ENCODE measurements at regions of chr18 and their contacts with region 1.

Region 1: GRCh38 chr18:55322178-55322735 is 265.7 kb downstream of the TCF4 start:
- DNase-seq: peak; percentile 90 to 91
- H3K4me3 ChIP-seq: peak overlapping the region; percentile 56 to 70
- H3K27ac ChIP-seq: peak overlapping the region; percentile 84 to 88
- H3K4me1 ChIP-seq: peaks cover 0 to 30% (median 4%) of the 10 kb centered on the region in 4 donors
- H3K27me3 ChIP-seq: no peaks in the 10 kb centered on the region
- CTCF ChIP-seq: no peak

Region 2: DNA sequence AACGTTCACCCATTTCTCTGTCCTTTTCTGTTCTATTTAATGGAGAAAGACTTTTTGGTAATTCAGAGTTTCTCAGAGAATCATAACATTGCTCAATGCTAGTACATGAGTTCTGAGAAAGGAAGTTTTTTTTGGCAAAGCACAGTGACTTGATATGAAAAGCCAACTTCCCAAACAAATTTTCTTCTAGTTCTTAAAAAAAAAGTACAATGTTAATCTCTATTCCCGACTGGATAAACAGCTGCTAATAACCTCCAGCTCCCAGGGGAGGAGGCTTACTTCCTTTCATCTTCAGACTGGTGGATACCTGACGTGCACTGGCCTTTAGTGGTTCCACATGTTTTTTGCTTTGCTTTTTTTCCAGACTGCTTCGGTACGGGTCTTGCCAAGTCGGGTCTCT is 78.4 kb before region 1 on chr18:
- intact Hi-C with region 1: loop called (anchors 5 kb)
- DNase-seq: peak in 1 of 2 donors; percentile 59
- H3K4me3 ChIP-seq: peak overlapping the region; percentile 27 to 36
- H3K27ac ChIP-seq: peak overlapping the region; percentile 49 to 69
- H3K4me1 ChIP-seq: peaks cover 0 to 51% (median 22%) of the 10 kb centered on the region in 4 donors
- H3K27me3 ChIP-seq: no peaks in the 10 kb centered on the region
- CTCF ChIP-seq: no peak

Region 3: GRCh38 chr18:55405893-55406406 is 83.7 kb after region 1 on chr18:
- intact Hi-C with region 1: loop called (anchors 10 kb)
- DNase-seq: peak; percentile 89 to 91
- H3K4me3 ChIP-seq: peak overlapping the region in 1 of 2 donors; percentile 25
- H3K27ac ChIP-seq: peak overlapping the region; percentile 56 to 58
- H3K4me1 ChIP-seq: peaks cover 0 to 40% (median 10%) of the 10 kb centered on the region in 4 donors
- H3K27me3 ChIP-seq: no peaks in the 10 kb centered on the region
- CTCF ChIP-seq: no peak

Region 4: DNA sequence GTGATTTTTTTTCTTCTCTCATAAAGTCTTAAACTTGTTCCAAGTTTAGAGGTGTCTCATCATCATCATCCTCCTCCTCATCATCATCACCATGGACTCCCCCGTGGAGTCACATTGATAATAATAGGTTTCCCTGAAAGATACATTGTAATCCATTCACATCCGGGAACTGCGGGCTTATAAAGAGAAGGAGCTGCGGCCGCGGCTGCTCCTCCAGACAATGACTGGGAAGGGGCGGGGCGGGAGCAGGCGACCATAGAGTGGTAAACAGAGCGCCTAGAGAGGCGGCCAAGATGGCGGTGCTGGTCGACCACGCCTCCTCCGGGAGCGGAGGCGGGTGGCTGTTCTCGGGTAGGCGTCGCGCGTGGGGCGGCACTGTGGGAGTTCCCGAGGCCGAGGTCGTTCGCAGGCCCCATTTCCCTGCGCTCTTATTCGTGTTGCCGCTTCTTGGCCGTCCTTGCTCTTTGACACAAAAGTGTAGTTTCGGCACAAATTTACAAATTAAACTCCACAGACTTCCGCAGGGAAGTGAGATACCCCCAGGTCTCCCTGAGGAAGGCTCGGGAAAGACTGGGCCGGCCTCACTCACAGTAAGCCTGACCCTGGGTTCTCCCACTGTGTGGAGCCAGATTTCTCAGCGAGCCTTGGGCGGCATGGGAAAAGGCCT is 267.5 kb after region 1 on chr18:
- intact Hi-C with region 1: loop called (anchors 5 kb)
- DNase-seq: peak; percentile 98
- H3K4me3 ChIP-seq: peak overlapping the region; percentile 70 to 85
- H3K27ac ChIP-seq: peak overlapping the region; percentile 76 to 80
- H3K4me1 ChIP-seq: peaks cover 0 to 14% (median 3%) of the 10 kb centered on the region in 4 donors
- H3K27me3 ChIP-seq: no peaks in the 10 kb centered on the region
- CTCF ChIP-seq: no peak

Measured in tibial artery (tissue), 4 donors.